ENCODE measurements at regions of chrX and their contacts with region 1.

Region 1: DNA sequence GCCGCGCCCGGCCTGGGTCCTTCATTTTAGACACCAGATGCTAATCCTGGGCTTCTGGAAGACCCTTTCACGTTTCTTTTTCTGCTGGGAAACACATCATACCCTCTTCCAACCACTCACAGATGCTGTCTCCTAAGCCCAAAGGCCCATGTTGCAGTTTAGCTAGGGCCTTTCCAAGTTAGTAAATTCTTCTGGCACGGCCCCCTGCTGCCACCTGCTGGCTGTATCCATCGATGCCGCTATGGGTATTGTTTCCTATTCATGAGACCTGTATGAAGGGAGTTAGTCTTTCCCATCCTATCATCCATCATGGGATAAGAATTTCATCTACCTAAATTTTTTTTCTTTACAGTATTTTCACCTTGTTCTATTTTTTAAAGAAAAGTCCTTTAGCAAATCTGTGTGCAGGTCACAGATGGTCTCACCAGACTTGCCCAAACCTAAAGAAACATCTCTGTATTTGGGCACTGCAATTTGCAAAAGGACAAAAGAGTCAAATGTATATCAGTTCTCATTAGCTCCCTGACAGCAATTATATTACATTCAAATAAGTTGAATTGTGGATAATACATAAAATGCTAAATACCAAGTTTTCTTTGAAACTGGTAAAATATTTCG is 37.8 kb upstream of the SLC9A7 start:
- DNase-seq: peak; percentile 78
- ATAC-seq: peak; percentile 73
- H3K4me3 Mint-ChIP-seq: no peak overlapping the region
- H3K27ac Mint-ChIP-seq: no peak overlapping the region
- H3K4me1 Mint-ChIP-seq: peaks cover 18% of the 10 kb centered on the region
- H3K27me3 Mint-ChIP-seq: no peaks in the 10 kb centered on the region

Region 2: GRCh38 chrX:46758906-46759644 is 37.6 kb before region 1 on chrX and contains the start of gene SLC9A7:
- CTCF ChIA-PET with region 1: interaction called, 15 read pairs
- DNase-seq: peak; percentile 85
- ATAC-seq: peak; percentile 88
- H3K4me3 Mint-ChIP-seq: peak within 1 kb of the TSS; percentile 90
- H3K27ac Mint-ChIP-seq: peak within 1 kb of the TSS; percentile 78
- H3K4me1 Mint-ChIP-seq: peaks cover 35% of the 10 kb centered on the region
- H3K27me3 Mint-ChIP-seq: peaks cover 9% of the 10 kb centered on the region
- total RNA-seq, gene SLC9A7: 9.1 to 19.0 TPM

Region 3: DNA sequence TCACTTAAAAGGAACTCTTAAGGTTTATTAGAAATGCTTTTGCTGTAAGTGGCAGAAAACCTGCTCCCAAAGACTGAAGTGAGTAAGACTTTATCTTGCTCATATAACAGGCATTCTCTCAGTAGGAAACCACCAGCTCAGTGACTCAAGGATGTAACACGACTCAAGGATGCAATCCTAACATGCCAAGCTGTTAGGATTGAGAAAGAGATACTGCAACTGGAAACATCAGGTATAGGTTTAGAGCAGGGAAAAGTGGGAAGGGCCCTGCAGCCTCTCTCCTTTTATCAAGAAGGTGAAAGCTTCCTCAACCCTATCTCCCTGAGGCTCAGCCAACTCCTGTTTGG is 25.9 kb before region 1 on chrX:
- CTCF ChIA-PET with region 1: no interaction called
- DNase-seq: no peak
- ATAC-seq: no peak
- H3K4me3 Mint-ChIP-seq: no peak overlapping the region
- H3K27ac Mint-ChIP-seq: no peak overlapping the region
- H3K4me1 Mint-ChIP-seq: no peaks in the 10 kb centered on the region
- H3K27me3 Mint-ChIP-seq: peaks cover 3% of the 10 kb centered on the region

Region 4: GRCh38 chrX:46823491-46823890 is 26.8 kb after region 1 on chrX:
- CTCF ChIA-PET with region 1: no interaction called
- DNase-seq: no peak
- ATAC-seq: no peak
- H3K4me3 Mint-ChIP-seq: no peak overlapping the region
- H3K27ac Mint-ChIP-seq: no peak overlapping the region
- H3K4me1 Mint-ChIP-seq: no peaks in the 10 kb centered on the region
- H3K27me3 Mint-ChIP-seq: peaks cover 2% of the 10 kb centered on the region